ENCODE measurements at regions of chr9 and their contacts with region 1.

Region 1: DNA sequence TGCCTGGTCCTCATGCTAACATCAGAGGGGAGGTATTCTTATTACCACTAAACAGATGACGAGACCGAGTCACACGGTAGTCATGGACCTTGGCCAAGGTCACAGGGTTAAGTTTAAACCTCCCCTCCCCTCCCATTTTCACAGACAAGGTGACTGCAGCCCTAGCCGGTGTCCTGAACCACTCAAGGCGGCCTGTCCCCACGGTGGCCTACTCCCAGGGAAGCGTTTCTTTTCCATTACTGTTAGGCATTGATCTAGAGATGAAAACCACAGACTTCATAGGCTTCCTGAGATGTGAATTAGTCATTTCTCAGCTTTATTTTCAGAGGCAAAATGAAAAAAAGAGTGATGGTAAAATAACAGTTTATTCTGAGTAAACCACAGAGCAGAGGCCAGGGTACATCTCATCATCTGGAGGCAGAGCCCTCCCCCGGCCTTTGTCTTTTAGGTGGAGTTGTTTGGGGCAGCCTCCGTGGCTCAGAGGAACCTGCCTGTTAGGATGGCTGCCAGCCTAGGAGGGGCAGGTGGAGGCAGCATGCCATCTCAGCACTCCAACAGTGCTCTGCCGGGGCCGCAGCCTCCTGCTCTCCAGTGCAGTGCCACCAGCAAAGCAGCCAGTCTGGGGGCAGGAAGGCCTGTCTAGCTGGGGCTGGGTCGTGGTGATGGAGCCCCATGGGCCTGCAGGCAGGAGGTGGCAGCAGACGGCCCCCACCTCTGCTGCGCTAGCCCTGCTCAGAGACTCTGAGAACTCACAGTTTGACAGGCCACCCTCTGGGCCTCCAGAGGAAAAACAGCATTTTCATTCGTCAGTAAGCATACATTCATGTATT is 71.2 kb downstream of the RAPGEF1 start:
- DNase-seq: peak; percentile 58
- H3K4me3 Mint-ChIP-seq: peak overlapping the region; percentile 66
- H3K27ac Mint-ChIP-seq: peak overlapping the region; percentile 98
- H3K4me1 Mint-ChIP-seq: peaks cover 99% of the 10 kb centered on the region
- H3K27me3 Mint-ChIP-seq: no peaks in the 10 kb centered on the region

Region 2: GRCh38 chr9:131361202-131361833 is 307.3 kb before region 1 on chr9:
- intact Hi-C with region 1: no loop called
- DNase-seq: no peak
- H3K4me3 Mint-ChIP-seq: peak overlapping the region; percentile 49
- H3K27ac Mint-ChIP-seq: no peak overlapping the region
- H3K4me1 Mint-ChIP-seq: peaks cover 18% of the 10 kb centered on the region
- H3K27me3 Mint-ChIP-seq: no peaks in the 10 kb centered on the region

Region 3: GRCh38 chr9:131502781-131503625 is 165.7 kb before region 1 on chr9 and contains the start of gene POMT1:
- intact Hi-C with region 1: loop called (anchors 2 kb)
- DNase-seq: peak; percentile 90
- H3K4me3 Mint-ChIP-seq: peak within 1 kb of the TSS; percentile 93
- H3K27ac Mint-ChIP-seq: peak within 1 kb of the TSS; percentile 90
- H3K4me1 Mint-ChIP-seq: peaks cover 48% of the 10 kb centered on the region
- H3K27me3 Mint-ChIP-seq: no peaks in the 10 kb centered on the region
- total RNA-seq, gene POMT1: 39.1 and 39.3 TPM in 2 replicates

Region 4: GRCh38 chr9:131627648-131628458 is 40.8 kb before region 1 on chr9:
- intact Hi-C with region 1: loop called (anchors 1 kb)
- DNase-seq: peak; percentile 61
- H3K4me3 Mint-ChIP-seq: peak overlapping the region; percentile 32
- H3K27ac Mint-ChIP-seq: peak overlapping the region; percentile 89
- H3K4me1 Mint-ChIP-seq: peaks cover 71% of the 10 kb centered on the region
- H3K27me3 Mint-ChIP-seq: peaks cover 2% of the 10 kb centered on the region

Region 5: DNA sequence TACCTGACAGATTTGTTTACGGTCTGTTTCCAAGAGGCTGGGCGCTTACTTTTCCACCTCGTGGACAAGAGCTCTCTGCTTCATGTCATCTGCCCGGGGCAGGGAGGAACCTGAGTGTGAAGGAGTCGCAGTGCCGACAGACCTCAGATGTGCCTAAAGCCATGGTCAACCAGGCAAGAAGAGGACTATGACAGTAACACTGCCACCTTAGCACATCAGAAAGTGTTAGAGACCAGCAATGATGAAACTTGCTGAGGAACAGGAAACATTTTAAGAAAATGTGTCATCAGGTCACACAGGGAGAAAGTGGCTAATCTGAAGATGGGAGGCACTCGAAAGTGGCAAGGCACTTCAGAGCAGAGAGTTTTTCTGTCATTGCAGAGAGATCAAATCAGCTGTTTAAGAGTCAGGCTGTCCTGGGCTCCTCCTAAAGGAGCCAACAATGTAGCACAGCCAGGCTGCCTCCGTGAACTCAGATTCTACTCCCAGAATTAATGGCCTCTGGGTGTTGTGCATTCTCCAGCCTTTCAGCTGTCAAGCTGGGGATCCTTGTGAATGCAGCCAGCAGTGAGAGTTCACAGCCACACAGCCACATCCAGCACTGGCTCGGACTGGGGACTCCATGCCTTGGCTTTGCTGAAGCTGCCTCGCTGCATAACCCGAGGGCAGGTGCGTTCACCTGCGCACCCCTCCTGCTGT is 23.4 kb before region 1 on chr9:
- intact Hi-C with region 1: loop called (anchors 1 kb)
- DNase-seq: no peak
- H3K4me3 Mint-ChIP-seq: no peak overlapping the region
- H3K27ac Mint-ChIP-seq: peak overlapping the region; percentile 96
- H3K4me1 Mint-ChIP-seq: peaks cover 73% of the 10 kb centered on the region
- H3K27me3 Mint-ChIP-seq: no peaks in the 10 kb centered on the region

Region 6: DNA sequence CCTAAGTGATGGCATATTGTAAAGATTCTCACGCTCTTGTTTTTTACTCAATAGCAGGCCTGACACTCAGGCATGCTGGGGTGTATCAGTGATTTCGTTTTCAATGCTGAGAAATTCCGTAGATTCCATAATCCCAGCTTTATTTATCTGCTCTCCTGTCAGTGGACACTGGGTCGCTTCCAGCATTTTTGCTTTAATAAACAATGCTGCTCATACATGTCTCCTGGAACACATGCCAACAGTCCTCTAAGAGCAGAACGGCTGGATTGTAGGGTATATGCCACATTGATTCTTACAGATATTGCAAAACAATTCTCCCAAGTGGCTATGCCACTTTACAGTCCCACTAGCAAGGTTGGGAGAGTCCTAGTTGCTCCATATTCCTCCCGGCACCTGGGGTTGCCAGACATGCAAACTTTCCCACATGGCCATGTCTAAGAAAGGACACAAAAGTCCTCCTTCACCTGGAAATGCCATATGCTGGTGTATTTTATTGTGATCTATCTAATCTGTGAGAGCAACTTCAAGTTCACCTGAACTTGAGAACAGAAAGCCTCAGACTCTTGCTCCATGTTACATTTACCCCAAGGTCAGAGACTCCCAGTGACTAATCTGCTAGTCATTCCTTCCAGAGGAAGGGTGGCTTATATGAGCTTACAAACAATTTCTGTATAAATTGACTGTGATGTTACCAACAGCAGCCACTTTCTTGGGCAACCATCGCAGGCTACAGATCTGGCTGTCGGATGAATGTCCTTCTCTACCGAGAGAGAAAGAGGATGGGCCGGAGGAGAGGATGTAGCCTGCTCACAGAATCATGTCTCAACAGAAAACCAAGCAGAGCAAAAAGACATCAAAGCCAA is 10.5 kb before region 1 on chr9:
- intact Hi-C with region 1: loop called (anchors 1 kb)
- DNase-seq: no peak
- H3K4me3 Mint-ChIP-seq: peak overlapping the region; percentile 73
- H3K27ac Mint-ChIP-seq: peak overlapping the region; percentile 100
- H3K4me1 Mint-ChIP-seq: peaks cover 91% of the 10 kb centered on the region
- H3K27me3 Mint-ChIP-seq: no peaks in the 10 kb centered on the region

Region 7: DNA sequence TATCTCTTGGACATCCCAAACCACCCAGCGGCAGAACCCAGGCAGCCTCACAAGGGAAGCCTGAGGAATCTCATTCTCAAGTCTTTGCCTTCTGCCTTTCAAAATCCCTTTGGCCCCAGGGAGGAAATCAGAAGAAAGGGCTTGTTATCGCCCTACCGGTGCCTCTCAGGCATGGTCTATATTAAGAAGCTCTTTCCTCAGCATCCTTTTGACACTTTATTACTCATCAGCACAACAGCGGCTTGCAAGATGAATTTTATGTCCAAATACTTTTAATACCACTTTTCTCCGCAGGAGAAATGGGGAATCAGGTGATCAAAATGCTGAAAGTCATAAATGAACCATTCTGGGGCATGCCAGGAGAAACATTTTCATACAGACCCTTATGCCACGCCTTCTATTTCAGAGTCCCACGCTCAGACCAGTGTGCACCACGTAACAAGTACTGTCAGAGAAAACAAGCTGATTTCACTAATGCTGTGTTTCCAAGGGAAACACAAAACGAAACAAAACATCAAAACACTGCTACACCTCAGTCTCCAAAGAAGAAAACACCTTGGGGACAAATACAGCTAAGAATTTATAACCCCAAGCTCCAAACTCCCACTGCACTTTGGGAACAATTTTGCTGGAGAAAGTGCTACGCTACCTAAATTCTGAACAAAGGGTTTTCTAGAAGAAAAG is 41.3 kb after region 1 on chr9:
- intact Hi-C with region 1: loop called (anchors 1 kb)
- DNase-seq: peak; percentile 44
- H3K4me3 Mint-ChIP-seq: peak overlapping the region; percentile 69
- H3K27ac Mint-ChIP-seq: peak overlapping the region; percentile 97
- H3K4me1 Mint-ChIP-seq: peaks cover 76% of the 10 kb centered on the region
- H3K27me3 Mint-ChIP-seq: no peaks in the 10 kb centered on the region

Region 8: DNA sequence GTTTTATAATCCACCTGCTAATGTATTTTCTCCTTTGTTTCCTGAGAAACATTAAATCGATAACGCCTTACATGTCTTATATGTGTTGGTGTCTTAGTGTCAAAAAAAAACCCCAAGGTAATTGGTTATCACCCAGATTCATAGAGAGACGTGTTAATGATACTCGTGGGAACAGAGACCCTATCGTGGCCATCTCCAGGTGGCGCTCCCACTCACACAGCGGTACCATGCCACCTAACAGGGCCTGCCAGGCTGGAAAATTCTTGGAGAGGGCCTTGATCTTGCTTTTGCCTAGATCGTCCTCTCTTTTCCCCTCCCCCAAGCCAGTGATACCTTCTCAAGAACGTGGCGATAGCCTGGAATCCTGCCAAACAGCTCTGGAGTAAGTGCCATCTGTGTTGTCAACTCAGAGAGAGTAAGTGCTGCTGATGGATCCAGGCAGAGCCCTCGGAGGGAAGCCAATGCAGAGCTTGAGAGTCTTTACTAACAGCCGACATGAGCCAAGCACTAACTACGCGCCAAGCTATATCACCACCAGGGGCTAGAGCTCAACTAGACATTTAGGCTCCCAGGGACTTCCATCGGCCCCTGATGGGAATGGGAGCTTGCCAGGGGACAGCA is 53.5 kb after region 1 on chr9:
- intact Hi-C with region 1: no loop called
- DNase-seq: no peak
- H3K4me3 Mint-ChIP-seq: no peak overlapping the region
- H3K27ac Mint-ChIP-seq: peak overlapping the region; percentile 7
- H3K4me1 Mint-ChIP-seq: peaks cover 86% of the 10 kb centered on the region
- H3K27me3 Mint-ChIP-seq: no peaks in the 10 kb centered on the region